ENCODE measurements at regions of chr9 and their contacts with region 1.

Region 1: GRCh38 chr9:37913480-37914153 is 9.7 kb upstream of the SLC25A51 start:
- DNase-seq: peak; percentile 47
- ATAC-seq: peak; percentile 93
- H3K4me3 ChIP-seq: no peak overlapping the region
- H3K27ac ChIP-seq: no peak overlapping the region
- H3K4me1 ChIP-seq: no peaks in the 10 kb centered on the region; the same call in 1 of the 2 replicates
- H3K27me3 ChIP-seq: no peaks in the 10 kb centered on the region
- CTCF ChIP-seq: peak; percentile 96 to 98 (median 97)
- EP300 ChIP-seq: no peak
- POLR2A ChIP-seq: no peak
- RAD21 ChIP-seq: peak; percentile 97

Region 2: DNA sequence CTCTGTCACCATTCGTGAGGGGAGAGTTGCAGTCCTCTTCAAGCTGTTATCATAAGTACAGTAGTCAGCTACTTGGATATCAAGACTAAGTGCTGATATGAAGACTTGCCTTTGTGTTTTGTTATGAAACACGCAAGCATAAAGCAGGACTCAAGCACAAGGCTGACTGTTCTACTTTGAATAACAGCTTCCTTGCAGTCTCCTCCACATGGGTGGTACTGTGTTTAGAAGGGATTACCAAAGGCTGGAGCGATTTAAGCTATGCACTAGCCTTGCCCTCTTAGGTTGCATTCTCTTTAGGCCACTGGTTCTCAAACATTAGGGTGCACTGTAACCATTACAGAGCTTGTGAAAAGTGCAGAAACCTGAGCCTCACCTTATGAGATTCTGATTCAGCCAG is 51.1 kb before region 1 on chr9:
- CTCF ChIA-PET with region 1: no interaction called
- POLR2A ChIA-PET with region 1: no interaction called
- RAD21 ChIA-PET with region 1: no interaction called
- SMC1A ChIA-PET with region 1: no interaction called
- in situ Hi-C with region 1: no loop called
- intact Hi-C with region 1: no loop called
- DNase-seq: no peak
- ATAC-seq: no peak
- H3K4me3 ChIP-seq: no peak overlapping the region
- H3K27ac ChIP-seq: no peak overlapping the region
- H3K4me1 ChIP-seq: no peaks in the 10 kb centered on the region
- H3K27me3 ChIP-seq: no peaks in the 10 kb centered on the region
- CTCF ChIP-seq: no peak
- EP300 ChIP-seq: no peak
- POLR2A ChIP-seq: no peak
- RAD21 ChIP-seq: no peak

Region 3: GRCh38 chr9:37925786-37926736 is 12.4 kb after region 1 on chr9:
- CTCF ChIA-PET with region 1: interaction called, 19 read pairs
- POLR2A ChIA-PET with region 1: interaction called, 4 read pairs
- RAD21 ChIA-PET with region 1: interaction called, 3 read pairs
- SMC1A ChIA-PET with region 1: interaction called, 5 read pairs
- in situ Hi-C with region 1: no loop called
- intact Hi-C with region 1: no loop called
- DNase-seq: no peak
- ATAC-seq: peak; percentile 42
- H3K4me3 ChIP-seq: no peak overlapping the region
- H3K27ac ChIP-seq: no peak overlapping the region
- H3K4me1 ChIP-seq: no peaks in the 10 kb centered on the region; the same call in 1 of the 2 replicates
- H3K27me3 ChIP-seq: no peaks in the 10 kb centered on the region
- CTCF ChIP-seq: no peak
- EP300 ChIP-seq: no peak
- POLR2A ChIP-seq: no peak
- RAD21 ChIP-seq: no peak

Region 4: GRCh38 chr9:38061326-38061977 is 147.8 kb after region 1 on chr9:
- CTCF ChIA-PET with region 1: interaction called, 25 read pairs
- POLR2A ChIA-PET with region 1: interaction called, 8 read pairs
- RAD21 ChIA-PET with region 1: interaction called, 13 read pairs
- SMC1A ChIA-PET with region 1: interaction called, 39 read pairs
- in situ Hi-C with region 1: no loop called
- intact Hi-C with region 1: no loop called
- DNase-seq: peak; percentile 65
- ATAC-seq: peak; percentile 81
- H3K4me3 ChIP-seq: no peak overlapping the region
- H3K27ac ChIP-seq: no peak overlapping the region
- H3K4me1 ChIP-seq: peaks cover 42% of the 10 kb centered on the region
- H3K27me3 ChIP-seq: peaks cover 0 to 2% of the 10 kb centered on the region in 2 experiments; a peak in 2 of 4 replicates
- CTCF ChIP-seq: no peak
- EP300 ChIP-seq: peak in 1 of 2 experiments; percentile 54; a peak in 1 of 4 replicates
- POLR2A ChIP-seq: no peak
- RAD21 ChIP-seq: no peak

Region 5: GRCh38 chr9:38263532-38263931 is 349.9 kb after region 1 on chr9:
- CTCF ChIA-PET with region 1: interaction called, 88 read pairs
- POLR2A ChIA-PET with region 1: no interaction called
- RAD21 ChIA-PET with region 1: interaction called, 51 read pairs
- SMC1A ChIA-PET with region 1: interaction called, 59 read pairs
- in situ Hi-C with region 1: no loop called
- intact Hi-C with region 1: loop called (anchors 2 kb)
- DNase-seq: no peak
- ATAC-seq: peak; percentile 29; the same call in 1 of the 3 replicates
- H3K4me3 ChIP-seq: no peak overlapping the region
- H3K27ac ChIP-seq: no peak overlapping the region
- H3K4me1 ChIP-seq: no peaks in the 10 kb centered on the region
- H3K27me3 ChIP-seq: no peaks in the 10 kb centered on the region
- CTCF ChIP-seq: peak in 1 of 3 experiments; percentile 34; a peak in 1 of 6 replicates
- EP300 ChIP-seq: no peak
- POLR2A ChIP-seq: no peak
- RAD21 ChIP-seq: peak; percentile 70

Region 6: GRCh38 chr9:38405785-38406184 is 492.2 kb after region 1 on chr9:
- CTCF ChIA-PET with region 1: interaction called, 9 read pairs
- POLR2A ChIA-PET with region 1: no interaction called
- RAD21 ChIA-PET with region 1: interaction called, 9 read pairs
- SMC1A ChIA-PET with region 1: interaction called, 4 read pairs
- in situ Hi-C with region 1: no loop called
- intact Hi-C with region 1: loop called (anchors 2 kb)
- DNase-seq: no peak
- ATAC-seq: no peak
- H3K4me3 ChIP-seq: no peak overlapping the region
- H3K27ac ChIP-seq: no peak overlapping the region
- H3K4me1 ChIP-seq: peaks cover 3% of the 10 kb centered on the region; the same call in 1 of the 2 replicates
- H3K27me3 ChIP-seq: no peaks in the 10 kb centered on the region; a peak in 3 of 4 replicates
- CTCF ChIP-seq: no peak
- EP300 ChIP-seq: no peak
- POLR2A ChIP-seq: no peak
- RAD21 ChIP-seq: no peak

Measured in GM12878 (cell line).